ENCODE measurements at regions of chr6 and their contacts with region 1.

Region 1: GRCh38 chr6:135651964-135652755 is 154.6 kb upstream of the AHI1 start:
- DNase-seq: peak; percentile 37
- ATAC-seq: peak; percentile 81
- H3K4me3 ChIP-seq: peak overlapping the region in 3 of 5 experiments; percentile 13 to 49 (median 15)
- H3K4me3 Mint-ChIP-seq: peak overlapping the region; percentile 52
- H3K27ac ChIP-seq: peak overlapping the region in 1 of 2 donors; percentile 65
- H3K27ac Mint-ChIP-seq: peak overlapping the region; percentile 89
- H3K4me1 ChIP-seq: peaks cover 12 to 18% of the 10 kb centered on the region in 2 donors
- H3K4me1 Mint-ChIP-seq: peaks cover 25% of the 10 kb centered on the region
- H3K27me3 ChIP-seq: no peaks in the 10 kb centered on the region
- H3K27me3 Mint-ChIP-seq: no peaks in the 10 kb centered on the region
- CTCF ChIP-seq: no peak

Region 2: DNA sequence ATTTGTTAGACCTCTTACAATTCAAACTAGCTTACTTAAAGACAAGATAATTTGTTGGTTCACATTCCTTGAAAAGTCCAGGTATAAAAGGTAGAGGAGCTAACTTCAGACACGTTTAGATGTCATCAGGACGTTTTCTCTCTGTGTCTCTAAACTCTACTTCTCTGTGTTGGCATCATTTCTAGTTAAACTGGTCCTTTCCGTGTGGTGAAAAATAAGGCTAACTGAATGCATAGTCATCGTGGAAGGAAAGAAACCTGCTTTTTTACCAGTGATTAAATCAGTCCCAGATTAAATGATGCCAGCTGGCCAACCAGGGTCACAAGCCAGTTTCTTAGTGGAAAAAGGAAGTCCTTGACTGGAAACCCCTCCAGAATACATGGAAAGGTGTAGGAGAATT is 13.8 kb after region 1 on chr6:
- CTCF ChIA-PET with region 1: no interaction called
- POLR2A ChIA-PET with region 1: no interaction called
- intact Hi-C with region 1: no loop called
- DNase-seq: no peak
- ATAC-seq: no peak
- H3K4me3 ChIP-seq: no peak overlapping the region
- H3K4me3 Mint-ChIP-seq: no peak overlapping the region
- H3K27ac ChIP-seq: no peak overlapping the region
- H3K27ac Mint-ChIP-seq: no peak overlapping the region
- H3K4me1 ChIP-seq: no peaks in the 10 kb centered on the region
- H3K4me1 Mint-ChIP-seq: no peaks in the 10 kb centered on the region
- H3K27me3 ChIP-seq: peaks cover 0 to 2% (median 0%) of the 10 kb centered on the region in 4 experiments
- H3K27me3 Mint-ChIP-seq: peaks cover 28% of the 10 kb centered on the region
- CTCF ChIP-seq: no peak

Region 3: GRCh38 chr6:135703621-135704020 is 51.5 kb after region 1 on chr6:
- CTCF ChIA-PET with region 1: no interaction called
- POLR2A ChIA-PET with region 1: no interaction called
- intact Hi-C with region 1: no loop called
- DNase-seq: no peak
- ATAC-seq: no peak
- H3K4me3 ChIP-seq: no peak overlapping the region
- H3K4me3 Mint-ChIP-seq: no peak overlapping the region
- H3K27ac ChIP-seq: no peak overlapping the region
- H3K27ac Mint-ChIP-seq: no peak overlapping the region
- H3K4me1 ChIP-seq: no peaks in the 10 kb centered on the region
- H3K4me1 Mint-ChIP-seq: no peaks in the 10 kb centered on the region
- H3K27me3 ChIP-seq: no peaks in the 10 kb centered on the region
- H3K27me3 Mint-ChIP-seq: peaks cover 16% of the 10 kb centered on the region
- CTCF ChIP-seq: no peak

Region 4: GRCh38 chr6:135851442-135852271 is 199.5 kb after region 1 on chr6 and contains the start of gene PDE7B:
- CTCF ChIA-PET with region 1: no interaction called
- POLR2A ChIA-PET with region 1: no interaction called
- intact Hi-C with region 1: loop called (anchors 1 kb)
- DNase-seq: peak; percentile 86
- ATAC-seq: peak; percentile 99
- H3K4me3 ChIP-seq: peak within 1 kb of the TSS; percentile 40 to 82 (median 67)
- H3K4me3 Mint-ChIP-seq: peak within 1 kb of the TSS; percentile 87
- H3K27ac ChIP-seq: peak within 1 kb of the TSS; percentile 64 to 85
- H3K27ac Mint-ChIP-seq: peak within 1 kb of the TSS; percentile 79
- H3K4me1 ChIP-seq: peaks cover 17 to 40% of the 10 kb centered on the region in 2 donors
- H3K4me1 Mint-ChIP-seq: peaks cover 48% of the 10 kb centered on the region
- H3K27me3 ChIP-seq: no peaks in the 10 kb centered on the region
- H3K27me3 Mint-ChIP-seq: no peaks in the 10 kb centered on the region
- CTCF ChIP-seq: no peak
- total RNA-seq, gene PDE7B: 7.5 and 9.2 TPM in 2 replicates

Measured in B cell (primary cell).